MCF 10A (cell line): ENCODE measurements at regions of chr1 and their contacts with region 1.

Region 1: GRCh38 chr1:39720094-39720999 is 18.3 kb upstream of the PPIE start:
- DNase-seq: peak; percentile 76
- H3K4me3 Mint-ChIP-seq: no peak overlapping the region
- H3K27ac Mint-ChIP-seq: no peak overlapping the region
- H3K4me1 Mint-ChIP-seq: no peaks in the 10 kb centered on the region
- H3K27me3 Mint-ChIP-seq: peaks cover 39% of the 10 kb centered on the region
- CTCF ChIP-seq: peak; percentile 50

Region 2: DNA sequence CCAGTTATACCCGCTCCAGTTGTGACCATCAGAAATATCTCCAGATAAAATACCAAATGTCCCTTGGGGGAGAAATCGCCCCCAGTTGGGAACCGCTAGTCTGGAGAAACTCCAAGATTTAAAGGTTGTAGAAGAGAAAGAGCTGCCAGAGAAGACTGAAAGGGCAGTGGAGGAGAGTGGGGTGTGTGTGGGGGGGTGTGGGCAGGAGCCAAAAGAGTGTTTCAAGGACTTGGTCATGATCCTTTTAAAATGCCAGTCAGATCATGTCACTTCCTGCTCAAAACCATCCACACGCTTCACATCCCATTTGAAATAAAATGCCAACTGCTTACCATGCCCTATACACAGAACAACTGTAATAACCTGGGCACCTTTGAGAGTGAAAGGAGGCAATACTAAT is 77.6 kb before region 1 on chr1:
- CTCF ChIA-PET with region 1: no interaction called
- POLR2A ChIA-PET with region 1: no interaction called
- intact Hi-C with region 1: no loop called
- DNase-seq: no peak
- H3K4me3 Mint-ChIP-seq: no peak overlapping the region
- H3K27ac Mint-ChIP-seq: no peak overlapping the region
- H3K4me1 Mint-ChIP-seq: no peaks in the 10 kb centered on the region
- H3K27me3 Mint-ChIP-seq: no peaks in the 10 kb centered on the region
- CTCF ChIP-seq: no peak

Region 3: GRCh38 chr1:39799770-39800470 is 79.6 kb after region 1 on chr1:
- CTCF ChIA-PET with region 1: interaction called, 3 read pairs
- POLR2A ChIA-PET with region 1: no interaction called
- intact Hi-C with region 1: loop called (anchors 10 kb)
- DNase-seq: peak; percentile 82
- H3K4me3 Mint-ChIP-seq: peak overlapping the region; percentile 19
- H3K27ac Mint-ChIP-seq: peak overlapping the region; percentile 78
- H3K4me1 Mint-ChIP-seq: peaks cover 26% of the 10 kb centered on the region
- H3K27me3 Mint-ChIP-seq: no peaks in the 10 kb centered on the region
- CTCF ChIP-seq: peak; percentile 96